ENCODE measurements at regions of chr5 and their contacts with region 1.

Region 1: GRCh38 chr5:40688127-40688761 is 8.5 kb downstream of the PTGER4 start:
- DNase-seq: peak; percentile 81
- H3K4me3 Mint-ChIP-seq: peak overlapping the region; percentile 99
- H3K27ac Mint-ChIP-seq: peak overlapping the region; percentile 91
- H3K4me1 Mint-ChIP-seq: peaks cover 71% of the 10 kb centered on the region
- H3K27me3 Mint-ChIP-seq: no peaks in the 10 kb centered on the region

Region 2: DNA sequence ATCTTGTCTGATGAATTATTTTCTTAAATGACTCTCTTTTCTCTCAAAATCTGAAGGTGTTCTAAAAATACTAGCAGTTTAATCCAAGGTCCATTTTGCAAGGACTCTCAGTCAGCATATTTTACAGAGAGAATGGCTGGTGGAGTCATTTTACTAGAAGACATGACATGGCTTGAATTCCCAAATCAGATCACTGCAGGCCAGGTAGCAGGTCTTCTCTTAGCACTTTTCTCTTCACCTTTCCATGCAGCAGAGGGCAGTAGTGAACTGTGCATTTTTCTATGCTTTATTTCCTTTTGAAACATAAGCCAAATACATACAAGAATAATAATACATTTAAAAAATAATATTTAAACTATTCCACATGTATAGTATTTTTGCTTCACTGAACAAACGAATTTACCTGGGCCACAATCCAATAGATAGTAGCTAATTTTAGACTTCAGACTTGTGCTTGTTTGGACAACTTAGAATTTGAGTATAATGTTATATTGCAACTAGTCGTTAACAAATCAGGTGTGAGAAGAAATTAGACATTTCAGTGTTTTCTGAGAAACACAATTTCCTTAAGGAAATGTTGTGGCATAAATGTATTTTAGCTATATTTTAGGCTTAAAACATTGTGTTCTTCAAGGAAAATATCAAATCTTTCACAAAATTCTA is 974.1 kb before region 1 on chr5:
- intact Hi-C with region 1: loop called (anchors 1 kb)
- DNase-seq: no peak
- H3K4me3 Mint-ChIP-seq: no peak overlapping the region
- H3K27ac Mint-ChIP-seq: no peak overlapping the region
- H3K4me1 Mint-ChIP-seq: no peaks in the 10 kb centered on the region
- H3K27me3 Mint-ChIP-seq: peaks cover 5% of the 10 kb centered on the region

Region 3: DNA sequence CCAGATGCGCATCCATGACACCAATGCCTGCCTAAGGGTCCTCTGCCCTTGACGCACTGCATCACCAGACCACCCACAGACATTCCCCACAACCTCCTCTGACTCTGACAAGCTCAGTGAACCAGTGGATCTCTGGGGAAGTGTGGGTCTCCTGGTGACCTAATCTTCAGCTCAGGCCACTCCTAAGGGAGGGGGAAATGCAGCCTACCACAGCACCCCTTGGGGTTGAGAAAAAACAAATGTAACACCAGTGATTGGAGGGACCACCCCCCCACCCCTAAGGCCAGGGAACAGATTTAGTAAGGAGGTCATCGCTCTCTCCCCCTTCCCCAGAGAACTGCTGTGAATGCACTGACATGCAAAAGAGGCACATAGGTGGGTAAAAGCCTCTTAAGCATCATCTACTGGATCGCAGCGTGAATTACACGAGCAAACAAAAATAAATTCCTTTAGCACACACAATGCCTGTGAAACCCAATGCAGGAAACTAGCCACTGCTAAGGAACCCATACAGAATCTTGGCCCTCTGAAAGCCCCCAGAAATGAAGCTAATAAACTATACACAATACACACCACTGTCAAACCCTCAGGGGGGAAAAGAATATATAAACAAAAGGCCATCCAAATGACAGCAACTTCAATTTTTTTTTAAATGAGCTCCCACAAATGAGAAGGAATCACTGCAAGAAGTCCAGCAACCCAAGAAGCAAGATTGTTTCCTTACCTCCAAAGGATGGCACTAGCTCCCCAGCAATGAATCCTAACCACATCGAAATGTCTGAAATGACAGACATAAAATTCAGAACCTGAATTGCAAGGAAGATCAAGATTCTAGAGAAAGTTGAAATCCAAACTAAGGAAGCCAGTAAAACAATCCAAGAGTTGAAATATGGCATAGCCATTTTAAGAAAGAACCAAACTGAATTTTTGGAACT is 522.2 kb before region 1 on chr5:
- intact Hi-C with region 1: loop called (anchors 1 kb)
- DNase-seq: no peak
- H3K4me3 Mint-ChIP-seq: no peak overlapping the region
- H3K27ac Mint-ChIP-seq: no peak overlapping the region
- H3K4me1 Mint-ChIP-seq: peaks cover 17% of the 10 kb centered on the region
- H3K27me3 Mint-ChIP-seq: no peaks in the 10 kb centered on the region

Region 4: DNA sequence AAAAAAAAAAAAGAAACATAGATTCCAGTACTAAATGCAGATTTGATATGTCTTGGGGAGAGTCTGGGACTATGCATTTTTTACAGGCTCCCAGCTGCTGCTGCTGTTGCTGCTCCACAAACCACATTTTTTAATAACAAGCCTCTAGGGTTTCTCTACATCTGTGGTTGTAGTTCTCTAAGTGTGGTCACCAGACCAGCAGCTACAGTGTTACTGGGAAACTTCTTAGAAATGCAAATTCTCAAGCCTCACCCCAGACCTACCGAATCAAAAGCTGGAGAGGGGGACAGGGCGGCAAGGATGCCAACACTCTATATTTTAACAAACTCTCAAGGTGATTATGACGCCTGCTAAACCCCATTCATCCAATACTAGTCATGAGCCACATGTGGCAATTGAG is 302.0 kb before region 1 on chr5:
- intact Hi-C with region 1: loop called (anchors 1 kb)
- DNase-seq: peak; percentile 19
- H3K4me3 Mint-ChIP-seq: no peak overlapping the region
- H3K27ac Mint-ChIP-seq: peak overlapping the region; percentile 19
- H3K4me1 Mint-ChIP-seq: peaks cover 88% of the 10 kb centered on the region
- H3K27me3 Mint-ChIP-seq: no peaks in the 10 kb centered on the region

Region 5: DNA sequence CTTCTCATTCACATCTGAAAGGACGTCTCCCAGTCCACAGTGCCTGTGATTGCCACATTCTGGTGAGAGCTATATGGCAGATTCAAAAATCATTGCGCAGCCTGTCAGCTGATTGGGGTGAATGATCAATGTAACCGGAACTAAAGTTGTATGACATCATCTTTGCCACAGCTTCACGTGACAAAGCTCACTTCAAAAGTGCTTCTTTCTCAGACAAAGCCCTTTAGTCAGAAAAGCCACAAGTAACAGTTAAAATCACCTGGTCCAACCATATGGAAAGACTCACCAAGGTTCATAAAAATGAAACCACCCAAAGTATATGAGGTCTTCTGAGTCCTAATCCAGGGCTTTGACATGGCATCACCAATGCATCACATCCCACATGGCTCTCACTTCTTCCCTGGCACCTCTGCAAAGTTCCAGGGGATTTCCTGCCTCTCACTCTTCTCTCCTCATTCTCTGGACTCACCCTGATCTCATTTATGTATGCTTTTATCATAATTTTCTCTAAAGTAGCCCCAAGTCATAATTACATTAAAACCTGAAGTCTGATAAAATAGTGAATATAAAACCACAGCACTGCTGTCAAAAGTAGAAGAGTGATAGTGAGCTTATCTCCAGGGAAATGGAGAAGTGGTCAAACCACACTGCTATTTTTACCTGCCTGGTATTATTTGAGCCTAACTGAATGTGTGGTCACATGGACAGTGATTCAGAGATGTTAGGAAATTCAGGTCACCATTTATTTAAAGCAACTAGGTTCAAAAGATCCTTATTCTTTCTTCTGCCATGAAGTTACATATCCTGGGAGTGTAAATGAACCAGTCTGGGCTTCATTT is 201.6 kb before region 1 on chr5:
- intact Hi-C with region 1: loop called (anchors 1 kb)
- DNase-seq: peak; percentile 63
- H3K4me3 Mint-ChIP-seq: peak overlapping the region; percentile 23
- H3K27ac Mint-ChIP-seq: peak overlapping the region; percentile 83
- H3K4me1 Mint-ChIP-seq: peaks cover 79% of the 10 kb centered on the region
- H3K27me3 Mint-ChIP-seq: no peaks in the 10 kb centered on the region

Region 6: DNA sequence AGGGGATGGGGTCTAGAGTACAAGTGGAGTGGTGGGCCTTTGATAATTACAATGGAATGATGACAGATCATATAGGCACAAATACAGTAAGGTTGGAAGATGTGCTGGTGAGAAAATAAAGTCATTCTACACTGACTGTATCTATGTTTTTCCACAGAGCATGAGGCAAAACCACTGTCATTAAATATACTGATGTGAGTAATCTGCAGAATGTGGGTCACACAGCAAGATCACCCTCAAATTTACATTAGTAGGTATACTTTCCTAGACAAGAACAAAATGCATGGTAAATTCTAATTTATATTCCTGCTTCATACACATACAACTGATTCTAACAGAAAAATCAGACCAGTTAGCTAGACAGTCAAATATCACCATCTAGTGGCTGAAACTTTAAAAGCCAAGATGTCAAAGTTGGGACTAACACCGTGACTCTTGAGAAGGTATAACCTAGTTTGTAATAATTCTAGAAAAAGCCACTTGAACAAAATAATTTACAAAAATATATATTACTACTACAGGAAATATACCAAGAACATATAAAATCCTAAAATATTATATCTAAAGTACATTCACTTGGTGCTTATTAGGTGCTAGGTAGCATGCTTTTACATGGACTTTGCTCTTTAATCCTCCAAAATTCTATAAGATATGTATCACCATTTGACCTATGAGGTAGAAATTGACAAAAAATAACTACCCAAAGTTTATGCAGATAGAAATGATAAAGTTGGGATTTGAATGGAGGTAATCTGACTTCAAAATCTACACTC is 48.0 kb after region 1 on chr5:
- intact Hi-C with region 1: loop called (anchors 1 kb)
- DNase-seq: no peak
- H3K4me3 Mint-ChIP-seq: no peak overlapping the region
- H3K27ac Mint-ChIP-seq: no peak overlapping the region
- H3K4me1 Mint-ChIP-seq: peaks cover 22% of the 10 kb centered on the region
- H3K27me3 Mint-ChIP-seq: no peaks in the 10 kb centered on the region

Measured in activated T-helper 1 cell treated with anti-CD3 and anti-CD28 coated beads, Interleukin-12 subunit alpha, Interleukin-12 subunit beta, Interleukin-2, Interleukin-4 antibody, amounts not matched to agents 30 ng/mL and 10 ng/mL and 1 ng/mL, durations not matched to agents 14 hours and 24 hours and 36 hours (primary cell).